Activated CD8-positive, alpha-beta T cell treated with anti-CD3 and anti-CD28 coated beads, Interleukin-2, amount 10 ng/mL, durations not matched to agents 7 days and 5 days (primary cell): ENCODE measurements at regions of chr2 and their contacts with region 1.

Region 1: DNA sequence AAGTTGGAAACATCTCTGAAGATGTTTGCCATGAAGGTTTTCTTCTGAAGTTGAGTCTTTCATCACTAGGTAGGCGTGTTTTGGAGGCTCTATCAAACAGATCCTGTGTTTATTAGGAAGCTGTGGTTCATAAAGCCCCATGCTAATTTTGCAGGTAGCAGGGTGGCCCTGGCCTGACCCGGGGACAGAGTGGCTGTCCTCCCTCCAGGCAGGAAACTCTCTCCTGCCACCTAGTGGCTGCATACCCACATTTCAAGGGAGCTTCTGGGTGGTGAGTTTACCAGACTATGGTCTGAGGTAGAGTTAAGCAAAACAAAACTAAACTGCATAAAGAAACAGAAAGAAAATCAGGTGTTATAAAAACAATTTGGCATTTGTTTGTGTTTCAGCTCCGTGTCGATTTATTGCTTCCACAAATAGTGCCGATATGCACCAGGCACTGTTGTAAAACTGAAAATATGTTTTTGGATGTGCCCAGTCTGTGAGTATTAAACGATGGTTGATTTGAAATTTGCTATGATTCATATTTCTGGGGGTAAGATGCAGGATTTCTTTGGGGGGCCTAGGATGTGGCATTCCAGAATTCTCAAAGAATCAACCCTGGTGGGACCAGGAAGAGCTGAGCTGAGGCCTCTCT is 26.0 kb upstream of the IL37 start:
- DNase-seq: peak; percentile 74
- ATAC-seq: peak; percentile 77
- H3K4me3 Mint-ChIP-seq: no peak overlapping the region
- H3K27ac Mint-ChIP-seq: no peak overlapping the region
- H3K4me1 Mint-ChIP-seq: peaks cover 27% of the 10 kb centered on the region
- H3K27me3 Mint-ChIP-seq: peaks cover 9% of the 10 kb centered on the region

Region 2: GRCh38 chr2:112764071-112765044 is 120.6 kb before region 1 on chr2 and contains the start of gene CKAP2L:
- CTCF ChIA-PET with region 1: interaction called, 11 read pairs
- POLR2A ChIA-PET with region 1: interaction called, 3 read pairs
- DNase-seq: peak; percentile 99
- ATAC-seq: peak; percentile 98
- H3K4me3 Mint-ChIP-seq: peak within 1 kb of the TSS; percentile 99
- H3K27ac Mint-ChIP-seq: peak within 1 kb of the TSS; percentile 98
- H3K4me1 Mint-ChIP-seq: peaks cover 52% of the 10 kb centered on the region
- H3K27me3 Mint-ChIP-seq: no peaks in the 10 kb centered on the region
- total RNA-seq, gene CKAP2L: 59.3 to 63.4 TPM

Region 3: GRCh38 chr2:112836695-112837117 is 48.3 kb before region 1 on chr2 and contains the start of gene IL1B:
- CTCF ChIA-PET with region 1: interaction called, 10 read pairs
- POLR2A ChIA-PET with region 1: no interaction called
- DNase-seq: no peak
- ATAC-seq: no peak
- H3K4me3 Mint-ChIP-seq: no peak within 1 kb of the TSS
- H3K27ac Mint-ChIP-seq: no peak within 1 kb of the TSS
- H3K4me1 Mint-ChIP-seq: no peaks in the 10 kb centered on the region
- H3K27me3 Mint-ChIP-seq: peaks cover 45% of the 10 kb centered on the region
- total RNA-seq, gene IL1B: not detected

Region 4: DNA sequence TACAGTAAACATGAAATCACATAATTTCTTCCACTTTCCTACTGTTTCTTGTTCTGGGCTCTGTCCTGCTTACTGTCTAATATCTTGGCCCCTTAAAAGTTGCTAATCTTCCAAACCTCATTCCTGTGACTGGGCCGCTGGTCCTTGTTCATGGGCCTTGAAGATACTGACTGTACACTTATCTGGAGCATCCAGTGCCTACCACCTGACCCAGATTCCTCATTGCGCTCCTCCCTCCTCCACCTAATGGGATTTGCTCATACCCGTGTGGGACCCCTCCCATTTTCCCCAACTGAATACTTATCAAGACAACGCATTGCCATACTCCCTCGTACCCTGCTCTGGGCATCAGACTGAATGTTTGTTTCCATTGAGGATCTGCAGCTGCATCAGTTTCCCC is 19.9 kb after region 1 on chr2:
- CTCF ChIA-PET with region 1: interaction called, 10 read pairs
- POLR2A ChIA-PET with region 1: no interaction called
- DNase-seq: no peak
- ATAC-seq: no peak
- H3K4me3 Mint-ChIP-seq: no peak overlapping the region
- H3K27ac Mint-ChIP-seq: no peak overlapping the region
- H3K4me1 Mint-ChIP-seq: no peaks in the 10 kb centered on the region
- H3K27me3 Mint-ChIP-seq: no peaks in the 10 kb centered on the region

Region 5: GRCh38 chr2:112920923-112921532 is 36.0 kb after region 1 on chr2:
- CTCF ChIA-PET with region 1: interaction called, 15 read pairs
- POLR2A ChIA-PET with region 1: interaction called, 3 read pairs
- DNase-seq: peak; percentile 24
- ATAC-seq: peak; percentile 49
- H3K4me3 Mint-ChIP-seq: no peak overlapping the region
- H3K27ac Mint-ChIP-seq: peak overlapping the region; percentile 41
- H3K4me1 Mint-ChIP-seq: peaks cover 8% of the 10 kb centered on the region
- H3K27me3 Mint-ChIP-seq: peaks cover 2% of the 10 kb centered on the region

Region 6: GRCh38 chr2:112985090-112985489 is 100.1 kb after region 1 on chr2:
- CTCF ChIA-PET with region 1: no interaction called
- POLR2A ChIA-PET with region 1: no interaction called
- DNase-seq: peak; percentile 76
- ATAC-seq: peak; percentile 98
- H3K4me3 Mint-ChIP-seq: peak overlapping the region; percentile 9
- H3K27ac Mint-ChIP-seq: peak overlapping the region; percentile 70
- H3K4me1 Mint-ChIP-seq: peaks cover 21% of the 10 kb centered on the region
- H3K27me3 Mint-ChIP-seq: no peaks in the 10 kb centered on the region

Region 7: GRCh38 chr2:112996635-112997034 is 111.6 kb after region 1 on chr2:
- CTCF ChIA-PET with region 1: no interaction called
- POLR2A ChIA-PET with region 1: no interaction called
- DNase-seq: peak; percentile 88
- ATAC-seq: peak; percentile 97
- H3K4me3 Mint-ChIP-seq: peak overlapping the region; percentile 40
- H3K27ac Mint-ChIP-seq: peak overlapping the region; percentile 79
- H3K4me1 Mint-ChIP-seq: peaks cover 31% of the 10 kb centered on the region
- H3K27me3 Mint-ChIP-seq: no peaks in the 10 kb centered on the region

Region 8: DNA sequence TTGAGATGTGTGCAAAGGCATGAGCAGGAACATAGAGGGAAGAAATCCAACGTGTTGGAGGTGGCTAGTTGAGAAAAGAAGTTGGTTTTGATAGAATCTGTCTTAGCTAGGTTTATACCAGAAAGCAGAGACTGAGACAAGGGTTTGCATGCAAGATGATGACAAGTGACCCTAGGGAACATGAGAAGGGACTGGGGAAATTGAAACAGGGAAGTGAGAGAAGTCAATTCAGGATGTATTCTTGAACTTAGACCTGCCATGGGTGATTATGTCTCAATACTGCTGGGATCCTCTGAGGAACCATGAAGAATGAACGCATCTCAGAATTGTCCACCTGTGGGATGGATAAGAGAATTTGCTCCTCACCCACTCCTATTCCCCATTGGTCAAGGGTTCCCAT is 140.8 kb after region 1 on chr2:
- CTCF ChIA-PET with region 1: no interaction called
- POLR2A ChIA-PET with region 1: no interaction called
- DNase-seq: no peak
- ATAC-seq: no peak
- H3K4me3 Mint-ChIP-seq: no peak overlapping the region
- H3K27ac Mint-ChIP-seq: no peak overlapping the region
- H3K4me1 Mint-ChIP-seq: no peaks in the 10 kb centered on the region
- H3K27me3 Mint-ChIP-seq: peaks cover 42% of the 10 kb centered on the region